ENCODE measurements at regions of chr2 and their contacts with region 1.

Region 1: DNA sequence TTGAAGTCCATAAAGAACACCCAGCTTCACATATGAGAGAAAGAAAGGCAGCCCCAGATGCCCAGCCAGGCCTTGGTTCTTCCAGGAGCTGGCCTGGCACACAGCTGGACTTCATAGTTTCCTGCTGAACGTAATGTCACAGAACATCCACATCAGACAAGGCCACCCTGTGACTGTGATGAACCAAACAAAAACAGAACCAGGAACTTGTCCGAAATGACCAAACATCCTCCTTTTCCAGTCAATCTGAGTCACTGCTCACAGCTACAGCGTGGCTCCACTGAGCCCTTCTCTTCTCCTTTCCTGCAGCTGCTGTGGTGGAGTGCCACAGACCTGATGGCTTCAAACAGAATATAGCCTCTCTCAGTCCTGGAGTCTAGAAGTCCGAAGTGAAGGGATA is 45.4 kb upstream of the PAPOLG start:
- DNase-seq: no peak
- ATAC-seq: peak; percentile 93
- H3K4me3 ChIP-seq: no peak overlapping the region
- H3K27ac ChIP-seq: no peak overlapping the region
- H3K4me1 ChIP-seq: no peaks in the 10 kb centered on the region
- H3K27me3 ChIP-seq: no peaks in the 10 kb centered on the region
- CTCF ChIP-seq: no peak

Region 2: GRCh38 chr2:60002158-60002867 is 708.4 kb before region 1 on chr2:
- intact Hi-C with region 1: no loop called
- DNase-seq: no peak
- ATAC-seq: no peak
- H3K4me3 ChIP-seq: no peak overlapping the region
- H3K27ac ChIP-seq: no peak overlapping the region
- H3K4me1 ChIP-seq: no peaks in the 10 kb centered on the region
- H3K27me3 ChIP-seq: no peaks in the 10 kb centered on the region
- CTCF ChIP-seq: no peak

Region 3: DNA sequence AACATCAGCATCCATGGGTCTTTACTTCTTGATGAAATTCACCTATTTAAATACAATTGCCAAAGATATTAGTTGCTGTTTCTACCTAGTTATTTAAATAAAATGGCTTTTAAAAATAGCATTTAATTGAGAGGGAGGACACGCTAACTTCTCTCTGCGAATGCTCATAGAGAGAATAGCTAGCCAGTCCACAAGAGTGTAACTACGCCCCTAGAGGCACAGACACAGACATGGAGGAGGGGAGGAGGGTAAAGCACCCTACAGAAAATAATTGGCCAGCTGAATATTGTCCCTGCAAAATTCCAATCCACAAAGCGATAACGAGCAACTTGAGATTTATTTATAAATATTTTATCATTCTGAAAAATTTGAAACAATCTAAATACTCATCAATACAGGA is 51.7 kb before region 1 on chr2:
- intact Hi-C with region 1: no loop called
- DNase-seq: no peak
- ATAC-seq: no peak
- H3K4me3 ChIP-seq: no peak overlapping the region
- H3K27ac ChIP-seq: no peak overlapping the region
- H3K4me1 ChIP-seq: no peaks in the 10 kb centered on the region
- H3K27me3 ChIP-seq: no peaks in the 10 kb centered on the region
- CTCF ChIP-seq: no peak

Region 4: GRCh38 chr2:60840880-60841279 is 130.2 kb after region 1 on chr2:
- intact Hi-C with region 1: no loop called
- DNase-seq: no peak
- ATAC-seq: no peak
- H3K4me3 ChIP-seq: no peak overlapping the region
- H3K27ac ChIP-seq: no peak overlapping the region
- H3K4me1 ChIP-seq: no peaks in the 10 kb centered on the region
- H3K27me3 ChIP-seq: no peaks in the 10 kb centered on the region
- CTCF ChIP-seq: no peak

Region 5: GRCh38 chr2:60998628-60999545 is 288.2 kb after region 1 on chr2:
- intact Hi-C with region 1: loop called (anchors 10 kb)
- DNase-seq: no peak
- ATAC-seq: peak; percentile 78
- H3K4me3 ChIP-seq: no peak overlapping the region
- H3K27ac ChIP-seq: no peak overlapping the region
- H3K4me1 ChIP-seq: no peaks in the 10 kb centered on the region
- H3K27me3 ChIP-seq: no peaks in the 10 kb centered on the region
- CTCF ChIP-seq: peak; percentile 79

Measured in upper lobe of right lung (tissue), 1 donor.